Common myeloid progenitor, CD34-positive (primary cell): ENCODE measurements at regions of chr2 and their contacts with region 1.

Region 1: GRCh38 chr2:233867993-233868532 is at the start of gene MSL3B:
- DNase-seq: peak; percentile 61 to 77 (median 77)
- H3K4me3 ChIP-seq: peak within 1 kb of the TSS; percentile 43 to 81 (median 67)
- H3K27ac ChIP-seq: peak within 1 kb of the TSS in 1 of 2 experiments; percentile 39
- H3K4me1 ChIP-seq: peaks cover 0 to 5% (median 1%) of the 10 kb centered on the region in 4 experiments
- H3K27me3 ChIP-seq: peaks cover 0 to 14% (median 0%) of the 10 kb centered on the region in 5 experiments

Region 2: GRCh38 chr2:233857511-233858141 is 10.4 kb before region 1 on chr2:
- CTCF ChIA-PET with region 1: interaction called, 25 read pairs
- POLR2A ChIA-PET with region 1: no interaction called
- DNase-seq: peak; percentile 76 to 94 (median 92)
- H3K4me3 ChIP-seq: peak overlapping the region in 1 of 7 experiments; percentile 17
- H3K27ac ChIP-seq: peak overlapping the region in 1 of 2 experiments; percentile 49
- H3K4me1 ChIP-seq: peaks cover 13 to 30% (median 20%) of the 10 kb centered on the region in 4 experiments
- H3K27me3 ChIP-seq: peaks cover 0 to 3% (median 0%) of the 10 kb centered on the region in 5 experiments

Region 3: DNA sequence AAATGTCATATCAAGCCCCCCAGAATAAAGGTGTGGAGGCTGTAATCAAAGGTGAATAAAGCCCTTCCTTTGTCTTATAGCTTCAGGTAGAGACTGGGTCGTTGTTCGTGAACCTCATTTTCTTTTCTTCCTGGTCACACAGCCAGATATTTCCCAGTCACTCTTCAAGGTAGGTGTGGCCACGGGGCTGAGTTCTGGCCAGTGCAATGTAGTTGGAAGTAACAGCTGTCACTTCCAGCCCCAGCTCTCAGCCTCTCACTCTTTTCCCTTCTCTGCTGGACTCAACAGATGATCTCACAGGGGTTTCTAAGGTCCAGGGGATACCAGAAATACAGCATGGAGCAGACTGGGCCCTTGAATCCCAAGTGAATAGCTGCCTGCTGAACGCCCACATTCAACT is 33.3 kb after region 1 on chr2:
- CTCF ChIA-PET with region 1: no interaction called
- POLR2A ChIA-PET with region 1: no interaction called
- DNase-seq: no peak
- H3K4me3 ChIP-seq: no peak overlapping the region
- H3K27ac ChIP-seq: no peak overlapping the region
- H3K4me1 ChIP-seq: no peaks in the 10 kb centered on the region
- H3K27me3 ChIP-seq: peaks cover 2 to 47% (median 7%) of the 10 kb centered on the region in 5 experiments